ENCODE measurements at regions of chr4 and their contacts with region 1.

Region 1: DNA sequence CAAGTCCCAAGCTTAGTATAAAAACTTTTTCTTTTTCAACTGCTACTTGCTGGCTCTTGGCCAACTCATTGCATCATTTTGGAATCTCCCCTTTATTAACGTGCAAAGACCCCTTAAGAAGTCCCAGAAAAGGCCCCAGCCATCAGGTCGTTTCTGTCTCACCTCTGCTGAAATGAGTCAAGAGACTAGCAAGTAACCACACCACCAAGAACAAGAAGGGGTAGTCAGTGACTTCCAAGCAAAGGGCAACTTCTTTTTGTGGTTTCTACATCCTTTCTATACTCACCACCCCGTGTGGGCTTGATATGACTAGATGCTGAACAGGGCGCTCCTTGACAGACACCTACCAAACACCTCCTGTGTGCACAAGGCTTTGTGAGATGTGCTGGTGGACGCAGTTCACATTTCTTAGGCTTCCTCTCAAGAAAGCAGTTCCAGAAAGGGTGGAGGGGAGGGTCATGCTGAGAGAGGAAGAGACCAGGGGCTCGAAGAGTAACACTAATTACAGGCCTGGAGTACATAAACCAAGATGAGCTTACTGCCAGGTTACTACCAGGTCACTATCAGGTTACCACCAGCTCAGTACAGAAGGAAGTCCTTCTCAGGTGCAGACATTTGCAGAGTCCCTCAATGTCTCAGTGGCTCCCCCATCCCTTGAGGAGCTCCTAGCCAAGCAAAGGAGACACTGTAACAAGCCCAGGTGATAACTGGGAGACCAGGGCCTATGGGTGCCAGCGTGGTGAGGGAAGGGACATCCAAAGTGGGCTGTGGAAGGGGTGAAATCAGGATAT is 19.3 kb downstream of the JAKMIP1 start:
- DNase-seq: peak; percentile 81
- ATAC-seq: peak; percentile 89
- H3K4me3 Mint-ChIP-seq: peak overlapping the region; percentile 43
- H3K27ac Mint-ChIP-seq: peak overlapping the region; percentile 97
- H3K4me1 Mint-ChIP-seq: peaks cover 83% of the 10 kb centered on the region
- H3K27me3 Mint-ChIP-seq: no peaks in the 10 kb centered on the region

Region 2: GRCh38 chr4:6095023-6095752 is 85.8 kb before region 1 on chr4:
- CTCF ChIA-PET with region 1: no interaction called
- POLR2A ChIA-PET with region 1: no interaction called
- DNase-seq: no peak
- ATAC-seq: no peak
- H3K4me3 Mint-ChIP-seq: no peak overlapping the region
- H3K27ac Mint-ChIP-seq: no peak overlapping the region
- H3K4me1 Mint-ChIP-seq: peaks cover 25% of the 10 kb centered on the region
- H3K27me3 Mint-ChIP-seq: peaks cover 4% of the 10 kb centered on the region

Region 3: GRCh38 chr4:6134612-6135220 is 46.3 kb before region 1 on chr4:
- CTCF ChIA-PET with region 1: interaction called, 17 read pairs
- POLR2A ChIA-PET with region 1: no interaction called
- DNase-seq: peak; percentile 73
- ATAC-seq: peak; percentile 97
- H3K4me3 Mint-ChIP-seq: no peak overlapping the region
- H3K27ac Mint-ChIP-seq: peak overlapping the region; percentile 59
- H3K4me1 Mint-ChIP-seq: peaks cover 16% of the 10 kb centered on the region
- H3K27me3 Mint-ChIP-seq: peaks cover 2% of the 10 kb centered on the region

Region 4: GRCh38 chr4:6192245-6192644 is 11.2 kb after region 1 on chr4:
- CTCF ChIA-PET with region 1: interaction called, 15 read pairs
- POLR2A ChIA-PET with region 1: interaction called, 150 read pairs
- DNase-seq: no peak
- ATAC-seq: no peak
- H3K4me3 Mint-ChIP-seq: no peak overlapping the region
- H3K27ac Mint-ChIP-seq: no peak overlapping the region
- H3K4me1 Mint-ChIP-seq: peaks cover 12% of the 10 kb centered on the region
- H3K27me3 Mint-ChIP-seq: peaks cover 7% of the 10 kb centered on the region

Region 5: DNA sequence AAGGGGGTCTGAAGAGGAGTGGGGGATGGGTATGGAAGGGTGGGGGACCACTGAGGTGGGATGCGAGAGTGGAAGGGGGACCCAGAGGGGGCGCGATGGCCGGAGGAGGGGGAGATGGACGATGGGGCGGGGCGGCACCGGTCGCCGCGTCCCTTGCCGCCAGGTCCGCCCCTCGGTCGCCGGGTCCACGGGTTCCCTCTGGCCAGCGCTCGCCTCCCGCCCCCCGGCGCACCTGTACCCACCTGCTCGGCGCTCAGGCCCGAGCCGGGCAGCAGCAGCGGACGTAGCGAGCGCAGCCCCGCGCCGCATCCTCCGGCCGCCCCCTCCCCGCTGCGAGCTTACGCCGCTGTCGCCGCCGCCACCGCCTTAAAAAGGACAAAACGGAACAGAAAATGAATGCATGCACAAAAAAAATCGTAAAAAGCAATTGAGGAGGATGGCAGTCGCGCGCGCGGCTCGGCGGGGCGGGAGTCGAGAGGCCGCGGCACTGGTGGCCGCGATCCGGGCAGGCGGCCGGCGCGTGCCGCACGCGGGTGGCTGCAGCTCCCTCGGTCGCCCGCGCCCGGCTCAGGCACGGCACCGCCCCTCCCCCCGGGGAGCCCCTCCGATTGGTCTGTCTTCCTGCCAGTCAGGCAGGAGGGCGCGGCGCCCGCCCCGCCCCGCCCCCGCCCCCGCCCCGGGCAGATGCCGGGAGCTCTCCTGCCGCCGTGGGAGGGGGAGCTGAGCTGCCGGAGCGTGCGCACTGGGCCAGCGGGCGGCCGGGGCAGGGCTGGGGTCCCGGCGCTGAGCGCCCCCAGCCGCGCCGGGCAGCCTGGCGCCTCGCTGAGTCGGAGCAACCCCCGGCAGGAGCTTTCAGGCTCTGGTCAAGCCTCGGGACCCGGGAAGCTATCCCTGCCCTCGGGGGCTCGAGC is 19.2 kb after region 1 on chr4 and contains the start of gene JAKMIP1:
- CTCF ChIA-PET with region 1: interaction called, 17 read pairs
- POLR2A ChIA-PET with region 1: interaction called, 150 read pairs
- DNase-seq: peak; percentile 85
- ATAC-seq: peak; percentile 80
- H3K4me3 Mint-ChIP-seq: peak within 1 kb of the TSS; percentile 76
- H3K27ac Mint-ChIP-seq: peak within 1 kb of the TSS; percentile 60
- H3K4me1 Mint-ChIP-seq: peaks cover 35% of the 10 kb centered on the region
- H3K27me3 Mint-ChIP-seq: peaks cover 45% of the 10 kb centered on the region
- total RNA-seq, gene JAKMIP1: 9.3 to 9.6 TPM